ENCODE measurements at regions of chr9 and their contacts with region 1.

Region 1: DNA sequence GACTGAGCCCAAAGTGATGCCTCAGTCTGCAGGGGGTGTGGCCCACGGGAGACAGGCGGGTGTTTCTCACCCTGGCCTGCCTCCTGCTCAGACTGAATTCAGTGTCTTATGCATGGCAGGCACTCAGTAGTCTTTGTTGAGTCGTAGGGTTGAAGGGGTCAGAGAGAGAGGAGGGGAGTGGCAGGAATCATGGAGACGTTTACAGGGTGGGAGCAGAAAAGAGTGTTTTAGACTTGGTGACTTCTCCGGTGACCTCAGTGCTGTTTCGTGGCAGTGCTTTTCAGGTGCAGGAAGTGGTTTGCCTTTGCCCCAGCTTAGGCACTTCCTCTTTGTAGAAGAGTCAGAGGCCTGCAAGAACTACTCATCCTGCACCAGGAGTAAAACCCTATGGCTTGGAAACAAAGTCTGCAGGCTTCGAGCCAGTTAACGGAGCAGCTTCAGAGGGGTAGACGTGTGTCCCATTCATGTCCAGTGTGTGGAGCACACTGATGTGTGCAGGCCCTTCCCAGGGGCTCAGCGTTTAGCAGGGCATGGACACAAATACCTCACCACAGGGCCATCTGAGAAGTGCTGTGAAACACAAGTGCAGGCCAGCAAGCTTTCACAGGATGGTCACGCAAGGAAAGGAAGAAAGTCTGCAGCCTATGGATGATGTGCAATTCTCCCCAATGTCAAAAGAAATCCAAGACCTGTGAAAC is 24.5 kb upstream of the SEMA4D start:
- DNase-seq: peak; percentile 33 to 91 (median 88)
- ATAC-seq: peak; percentile 91
- H3K4me3 ChIP-seq: peak overlapping the region; percentile 40
- H3K4me3 Mint-ChIP-seq: peak overlapping the region; percentile 18 to 90 (median 82)
- H3K27ac ChIP-seq: peak overlapping the region; percentile 72
- H3K27ac Mint-ChIP-seq: peak overlapping the region; percentile 94 to 100 (median 97)
- H3K4me1 ChIP-seq: peaks cover 94 to 95% of the 10 kb centered on the region in 2 donors
- H3K4me1 Mint-ChIP-seq: peaks cover 81 to 97% (median 95%) of the 10 kb centered on the region in 7 donors
- H3K27me3 ChIP-seq: no peaks in the 10 kb centered on the region
- H3K27me3 Mint-ChIP-seq: no peaks in the 10 kb centered on the region

Region 2: DNA sequence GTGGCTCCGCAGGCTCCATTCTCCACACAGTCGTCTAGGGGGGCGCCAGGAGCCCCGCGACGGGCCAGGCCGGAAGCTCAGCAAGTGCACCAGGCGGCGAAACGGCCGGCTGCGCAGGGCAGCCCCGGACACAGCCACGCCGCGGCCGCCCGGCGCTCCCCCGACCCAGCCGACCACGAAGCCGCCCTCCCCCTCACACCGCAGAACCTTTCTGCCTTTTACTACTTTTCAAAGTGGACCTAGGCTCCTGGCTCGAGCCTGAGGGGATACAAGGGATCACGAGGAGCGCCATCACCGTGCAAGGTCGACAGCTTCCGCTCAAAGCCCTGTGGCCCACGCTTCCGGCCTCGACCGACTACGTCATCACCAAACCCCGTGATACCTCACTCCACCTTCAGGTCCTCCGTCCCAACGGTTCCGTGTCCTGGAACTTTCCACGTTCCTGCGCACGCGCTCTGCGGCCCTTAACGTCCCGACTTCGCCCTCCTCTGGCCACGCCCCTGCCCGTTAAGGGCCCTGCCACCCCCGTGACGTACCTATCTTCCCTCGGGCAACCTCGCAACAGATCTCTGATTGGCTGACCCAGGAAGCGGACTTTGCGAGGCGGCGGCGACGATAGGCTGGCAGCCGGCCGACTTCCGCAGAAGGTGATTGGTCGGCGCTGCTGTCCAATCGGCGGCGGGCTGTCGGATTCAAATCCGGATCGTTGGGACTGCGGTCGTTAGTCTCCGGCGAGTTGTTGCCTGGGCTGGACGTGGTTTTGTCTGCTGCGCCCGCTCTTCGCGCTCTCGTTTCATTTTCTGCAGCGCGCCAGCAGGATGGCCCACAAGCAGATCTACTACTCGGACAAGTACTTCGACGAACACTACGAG is 211.7 kb before region 1 on chr9 and contains the start of gene CKS2:
- CTCF ChIA-PET with region 1: no interaction called
- POLR2A ChIA-PET with region 1: no interaction called
- intact Hi-C with region 1: loop called in 1 of 2 experiments (anchors 2 kb)
- DNase-seq: peak; percentile 97 to 100 (median 99)
- ATAC-seq: peak; percentile 94
- H3K4me3 ChIP-seq: peak within 1 kb of the TSS; percentile 82
- H3K4me3 Mint-ChIP-seq: peak within 1 kb of the TSS; percentile 94 to 99 (median 96)
- H3K27ac ChIP-seq: peak within 1 kb of the TSS; percentile 96
- H3K27ac Mint-ChIP-seq: peak within 1 kb of the TSS; percentile 97 to 100 (median 99)
- H3K4me1 ChIP-seq: peaks cover 22 to 24% of the 10 kb centered on the region in 2 donors
- H3K4me1 Mint-ChIP-seq: peaks cover 0 to 36% (median 32%) of the 10 kb centered on the region in 7 donors
- H3K27me3 ChIP-seq: peaks cover 0 to 4% of the 10 kb centered on the region in 2 donors
- H3K27me3 Mint-ChIP-seq: peaks cover 0 to 7% (median 0%) of the 10 kb centered on the region in 5 donors
- total RNA-seq, gene CKS2: 5.2 to 121 (median 8.9) TPM

Region 3: DNA sequence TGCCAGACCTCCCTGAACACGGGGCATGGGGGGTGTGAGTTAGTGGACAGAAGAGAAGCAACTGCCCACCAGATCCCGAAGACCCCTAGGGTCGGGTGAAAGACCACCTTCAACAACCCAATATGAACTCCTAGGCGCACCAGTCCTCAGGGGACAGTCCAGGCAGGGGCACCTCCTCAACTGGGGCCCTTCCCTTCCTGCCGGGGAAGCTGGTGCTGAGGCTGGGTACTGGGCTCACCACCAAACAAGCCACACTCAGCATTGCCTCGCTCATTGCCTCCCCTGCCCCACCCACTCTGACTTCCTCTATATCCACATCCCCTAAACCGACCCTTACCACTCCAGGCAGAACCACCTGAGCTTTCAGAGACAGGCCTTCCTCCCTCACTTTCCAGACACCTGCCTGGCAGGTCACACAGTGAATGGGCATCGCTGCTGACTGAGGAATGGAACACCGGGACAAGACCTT is 67.0 kb before region 1 on chr9:
- CTCF ChIA-PET with region 1: interaction called, 3 read pairs
- POLR2A ChIA-PET with region 1: interaction called, 26 read pairs
- intact Hi-C with region 1: no loop called
- DNase-seq: peak in 7 of 9 donors; percentile 44 to 69 (median 64)
- ATAC-seq: peak; percentile 68
- H3K4me3 ChIP-seq: peak overlapping the region; percentile 42
- H3K4me3 Mint-ChIP-seq: peak overlapping the region; percentile 75 to 88 (median 84)
- H3K27ac ChIP-seq: peak overlapping the region; percentile 77
- H3K27ac Mint-ChIP-seq: peak overlapping the region; percentile 73 to 99 (median 98)
- H3K4me1 ChIP-seq: peaks cover 51 to 88% of the 10 kb centered on the region in 2 donors
- H3K4me1 Mint-ChIP-seq: peaks cover 70 to 100% (median 89%) of the 10 kb centered on the region in 7 donors
- H3K27me3 ChIP-seq: no peaks in the 10 kb centered on the region
- H3K27me3 Mint-ChIP-seq: no peaks in the 10 kb centered on the region

Region 4: GRCh38 chr9:89489548-89490530 is 32.6 kb before region 1 on chr9:
- CTCF ChIA-PET with region 1: interaction called, 7 read pairs
- POLR2A ChIA-PET with region 1: interaction called, 24 read pairs
- intact Hi-C with region 1: no loop called
- DNase-seq: peak in 8 of 9 donors; percentile 15 to 87 (median 78)
- ATAC-seq: peak; percentile 90
- H3K4me3 ChIP-seq: peak overlapping the region; percentile 22
- H3K4me3 Mint-ChIP-seq: peak overlapping the region; percentile 60 to 100 (median 88)
- H3K27ac ChIP-seq: peak overlapping the region; percentile 69
- H3K27ac Mint-ChIP-seq: peak overlapping the region; percentile 82 to 98 (median 89)
- H3K4me1 ChIP-seq: peaks cover 81 to 82% of the 10 kb centered on the region in 2 donors
- H3K4me1 Mint-ChIP-seq: peaks cover 78 to 100% (median 92%) of the 10 kb centered on the region in 7 donors
- H3K27me3 ChIP-seq: no peaks in the 10 kb centered on the region
- H3K27me3 Mint-ChIP-seq: no peaks in the 10 kb centered on the region

Region 5: DNA sequence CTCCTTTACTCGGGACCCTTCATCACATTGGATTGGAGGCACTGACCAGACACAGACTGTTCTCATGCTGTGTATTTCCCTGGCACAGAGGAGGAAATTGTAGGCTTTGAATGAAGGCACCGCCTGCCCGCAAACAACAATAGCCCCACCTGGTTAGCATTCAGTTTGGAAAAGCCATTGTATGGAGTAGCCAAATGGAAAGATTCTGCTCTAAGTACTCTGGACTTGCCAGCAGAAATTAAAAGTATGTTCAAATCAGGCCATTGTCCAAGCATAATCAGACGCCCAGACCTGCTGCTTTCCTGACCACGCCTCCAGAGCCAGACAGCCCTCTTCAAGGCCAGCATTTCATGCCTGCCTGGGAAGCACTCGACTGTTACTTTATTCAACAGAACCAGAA is 16.5 kb before region 1 on chr9:
- CTCF ChIA-PET with region 1: interaction called, 8 read pairs
- POLR2A ChIA-PET with region 1: interaction called, 31 read pairs
- intact Hi-C with region 1: loop called in 1 of 2 experiments (anchors 1 kb)
- DNase-seq: no peak
- ATAC-seq: no peak
- H3K4me3 ChIP-seq: no peak overlapping the region
- H3K4me3 Mint-ChIP-seq: peak overlapping the region in 2 of 10 donors; percentile 4 to 49
- H3K27ac ChIP-seq: no peak overlapping the region
- H3K27ac Mint-ChIP-seq: peak overlapping the region in 6 of 9 donors; percentile 1 to 81 (median 77)
- H3K4me1 ChIP-seq: peaks cover 39 to 73% of the 10 kb centered on the region in 2 donors
- H3K4me1 Mint-ChIP-seq: peaks cover 69 to 96% (median 88%) of the 10 kb centered on the region in 7 donors
- H3K27me3 ChIP-seq: no peaks in the 10 kb centered on the region
- H3K27me3 Mint-ChIP-seq: no peaks in the 10 kb centered on the region

Region 6: GRCh38 chr9:89542401-89543021 is 20.1 kb after region 1 on chr9:
- CTCF ChIA-PET with region 1: interaction called, 23 read pairs
- POLR2A ChIA-PET with region 1: interaction called, 139 read pairs
- intact Hi-C with region 1: no loop called
- DNase-seq: no peak
- ATAC-seq: no peak
- H3K4me3 ChIP-seq: no peak overlapping the region
- H3K4me3 Mint-ChIP-seq: peak overlapping the region in 4 of 10 donors; percentile 5 to 27 (median 12)
- H3K27ac ChIP-seq: no peak overlapping the region
- H3K27ac Mint-ChIP-seq: peak overlapping the region in 6 of 9 donors; percentile 10 to 86 (median 44)
- H3K4me1 ChIP-seq: peaks cover 28 to 61% of the 10 kb centered on the region in 2 donors
- H3K4me1 Mint-ChIP-seq: peaks cover 27 to 83% (median 77%) of the 10 kb centered on the region in 7 donors
- H3K27me3 ChIP-seq: no peaks in the 10 kb centered on the region
- H3K27me3 Mint-ChIP-seq: no peaks in the 10 kb centered on the region

Measured in naive thymus-derived CD4-positive, alpha-beta T cell (primary cell).